A673 (cell line): ENCODE measurements at regions of chr20 and their contacts with region 1.

Region 1: DNA sequence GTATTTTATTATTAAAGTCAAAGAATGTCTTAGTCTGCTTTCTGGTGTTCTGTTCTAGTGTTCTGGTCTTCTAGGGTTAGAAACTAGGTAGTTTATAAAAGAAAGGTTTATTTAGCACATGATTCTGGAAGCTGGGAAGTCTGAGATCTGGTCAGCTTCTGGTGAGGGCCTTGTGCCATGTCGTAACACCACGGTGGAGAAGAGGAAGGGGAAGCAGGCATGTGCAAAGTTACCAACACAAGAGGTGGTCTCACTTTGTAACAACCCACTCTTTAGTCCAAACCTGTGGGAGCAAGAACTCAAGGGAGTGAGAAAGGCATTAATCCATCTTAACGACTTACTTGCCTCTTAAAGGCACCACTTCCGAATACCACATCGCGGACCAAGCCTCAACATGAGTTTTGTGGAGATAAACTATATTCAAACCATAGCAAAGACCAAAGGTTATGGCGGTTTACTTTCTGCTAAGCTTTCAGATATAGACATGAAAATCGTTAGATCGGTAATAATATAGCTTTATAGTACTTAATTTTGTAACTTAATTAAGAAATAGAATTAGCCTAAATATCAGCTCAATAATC is 99.4 kb downstream of the NCOA3 start:
- DNase-seq: no peak
- H3K4me3 ChIP-seq: no peak overlapping the region
- H3K27ac ChIP-seq: no peak overlapping the region
- H3K4me1 ChIP-seq: peaks cover 35% of the 10 kb centered on the region
- H3K27me3 ChIP-seq: no peaks in the 10 kb centered on the region
- CTCF ChIP-seq: no peak

Region 2: GRCh38 chr20:47561180-47561579 is 39.9 kb before region 1 on chr20:
- CTCF ChIA-PET with region 1: no interaction called
- POLR2A ChIA-PET with region 1: interaction called, 17 read pairs
- intact Hi-C with region 1: no loop called
- DNase-seq: no peak
- H3K4me3 ChIP-seq: no peak overlapping the region
- H3K27ac ChIP-seq: no peak overlapping the region
- H3K4me1 ChIP-seq: peaks cover 37% of the 10 kb centered on the region
- H3K27me3 ChIP-seq: no peaks in the 10 kb centered on the region
- CTCF ChIP-seq: no peak

Region 3: DNA sequence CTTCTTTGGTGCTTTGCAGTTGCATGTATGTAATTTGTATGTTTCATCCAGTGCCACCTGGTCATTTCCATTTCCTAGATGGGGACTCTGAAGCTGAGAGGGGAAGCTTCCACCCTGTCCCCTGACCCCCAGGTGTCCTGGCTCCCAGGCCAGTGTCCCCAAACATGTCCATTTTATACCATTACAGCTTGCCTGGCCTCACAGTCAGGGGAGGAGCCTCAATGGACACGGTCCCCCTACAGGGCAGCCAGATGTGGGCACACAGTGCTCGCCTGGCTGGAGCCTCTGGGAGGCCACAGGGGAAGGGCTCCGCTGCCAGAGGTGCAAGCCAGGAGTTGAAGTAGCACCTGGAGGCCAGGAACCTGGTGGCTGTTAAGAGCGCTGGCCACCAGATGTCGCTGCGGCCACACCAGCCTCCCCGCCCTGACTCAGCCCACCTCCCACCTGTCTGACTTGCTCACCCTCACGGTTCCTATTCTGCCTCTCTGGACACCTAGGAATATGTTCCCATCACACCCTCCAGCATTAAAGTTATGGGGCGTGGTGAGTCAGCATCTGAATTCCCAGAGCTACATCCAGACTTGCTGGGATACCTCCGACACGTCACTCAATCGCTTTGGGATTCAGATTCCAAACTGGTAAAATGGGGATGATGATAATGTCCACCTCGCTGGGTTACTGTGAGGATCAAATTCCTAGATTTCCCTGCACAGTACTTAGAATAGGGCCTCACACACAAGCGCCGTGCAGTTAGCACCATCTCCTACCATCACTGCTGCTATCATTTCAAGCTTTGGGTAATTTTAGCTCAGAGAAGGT is 76.8 kb after region 1 on chr20:
- CTCF ChIA-PET with region 1: no interaction called
- POLR2A ChIA-PET with region 1: no interaction called
- intact Hi-C with region 1: no loop called
- DNase-seq: peak; percentile 35
- H3K4me3 ChIP-seq: no peak overlapping the region
- H3K27ac ChIP-seq: no peak overlapping the region
- H3K4me1 ChIP-seq: no peaks in the 10 kb centered on the region
- H3K27me3 ChIP-seq: no peaks in the 10 kb centered on the region
- CTCF ChIP-seq: peak; percentile 91